K562 (cell line): ENCODE measurements at regions of chr1 and their contacts with region 1.

Region 1: GRCh38 chr1:203267347-203267846 is 37.9 kb upstream of the BTG2 start:
- DNase-seq: peak; percentile 74 to 91 (median 76)
- ATAC-seq: peak; percentile 79
- H3K4me3 ChIP-seq: peak overlapping the region; percentile 43
- H3K27ac ChIP-seq: no peak overlapping the region
- H3K4me1 ChIP-seq: peaks cover 5 to 8% of the 10 kb centered on the region in 2 experiments; a peak in 4 of 5 replicates
- H3K27me3 ChIP-seq: peaks cover 13 to 18% of the 10 kb centered on the region in 2 experiments
- CTCF ChIP-seq: peak; percentile 93 to 97 (median 96)
- EP300 ChIP-seq: no peak
- POLR2A ChIP-seq: no peak
- RAD21 ChIP-seq: peak; percentile 88 to 92

Region 2: DNA sequence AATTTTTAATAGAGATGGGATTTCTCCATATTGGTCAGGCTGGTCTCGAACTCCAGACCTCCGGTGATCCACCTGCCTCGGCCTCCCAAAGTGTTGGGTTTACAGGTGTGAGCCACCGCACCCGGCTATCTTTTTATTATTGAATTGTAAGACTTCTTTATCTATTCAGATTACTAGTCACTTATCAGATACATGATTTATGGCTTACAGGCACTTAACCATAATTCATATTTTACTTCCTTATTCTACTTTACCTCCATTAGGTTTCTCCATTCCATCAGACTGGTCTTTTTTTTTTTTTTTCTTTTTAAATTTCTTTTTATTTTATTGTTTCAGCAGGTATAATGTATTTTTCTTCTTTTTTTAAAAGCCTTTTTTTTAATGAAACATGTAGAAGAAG is 255.8 kb before region 1 on chr1:
- CTCF ChIA-PET with region 1: no interaction called
- POLR2A ChIA-PET with region 1: no interaction called
- in situ Hi-C with region 1: no loop called
- intact Hi-C with region 1: no loop called
- DNase-seq: no peak
- ATAC-seq: no peak
- H3K4me3 ChIP-seq: no peak overlapping the region
- H3K27ac ChIP-seq: no peak overlapping the region
- H3K4me1 ChIP-seq: peaks cover 0 to 4% of the 10 kb centered on the region in 2 experiments; a peak in 2 of 5 replicates
- H3K27me3 ChIP-seq: no peaks in the 10 kb centered on the region
- CTCF ChIP-seq: no peak
- EP300 ChIP-seq: no peak
- POLR2A ChIP-seq: no peak
- RAD21 ChIP-seq: no peak

Region 3: DNA sequence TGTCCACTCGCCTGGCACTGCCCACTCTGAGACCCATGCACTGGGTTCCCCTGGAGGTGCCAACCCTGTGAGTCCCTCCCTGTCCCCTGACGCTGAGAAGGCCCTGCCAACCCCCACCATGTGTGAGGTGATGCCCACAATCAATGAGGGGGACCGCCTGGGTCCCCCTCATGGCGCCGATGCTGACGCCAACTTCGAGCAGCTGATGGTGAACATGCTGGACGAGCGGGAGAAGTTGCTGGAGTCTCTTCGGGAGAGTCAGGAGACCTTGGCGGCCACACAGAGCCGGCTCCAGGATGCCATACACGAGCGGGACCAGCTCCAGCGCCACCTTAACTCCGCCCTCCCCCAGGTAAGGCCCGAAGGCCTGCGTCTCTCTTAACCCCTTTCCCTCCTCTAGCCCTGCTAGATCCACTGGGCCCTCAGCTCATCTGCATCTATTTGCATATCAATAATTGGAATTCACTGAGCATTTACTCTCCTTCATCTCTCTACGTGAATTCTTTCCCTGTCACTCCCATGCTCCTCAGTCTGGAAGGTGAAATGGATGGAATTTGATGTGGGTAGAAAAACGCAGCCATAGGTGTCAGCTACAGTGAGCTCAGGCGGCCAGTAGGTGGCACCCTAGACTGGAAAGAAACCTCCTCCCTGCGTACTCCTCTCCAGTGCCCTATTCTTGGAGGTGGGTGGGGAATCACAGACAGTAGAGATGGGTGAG is 228.3 kb before region 1 on chr1:
- CTCF ChIA-PET with region 1: interaction called, 4 read pairs
- POLR2A ChIA-PET with region 1: no interaction called
- in situ Hi-C with region 1: no loop called
- intact Hi-C with region 1: loop called (anchors 1 kb)
- DNase-seq: peak; percentile 81 to 83 (median 82)
- ATAC-seq: peak; percentile 95
- H3K4me3 ChIP-seq: no peak overlapping the region
- H3K27ac ChIP-seq: no peak overlapping the region
- H3K4me1 ChIP-seq: no peaks in the 10 kb centered on the region; a peak in 2 of 5 replicates
- H3K27me3 ChIP-seq: peaks cover 31 to 59% of the 10 kb centered on the region in 2 experiments; a peak in 4 of 5 replicates
- CTCF ChIP-seq: peak; percentile 91 to 99 (median 97)
- EP300 ChIP-seq: no peak
- POLR2A ChIP-seq: no peak
- RAD21 ChIP-seq: peak; percentile 72 to 90

Region 4: GRCh38 chr1:203216274-203217138 is 50.9 kb before region 1 on chr1:
- CTCF ChIA-PET with region 1: no interaction called
- POLR2A ChIA-PET with region 1: interaction called, 3 read pairs
- in situ Hi-C with region 1: no loop called
- intact Hi-C with region 1: loop called (anchors 2 kb)
- DNase-seq: peak; percentile 71 to 82 (median 75)
- ATAC-seq: peak; percentile 94
- H3K4me3 ChIP-seq: no peak overlapping the region
- H3K27ac ChIP-seq: no peak overlapping the region
- H3K4me1 ChIP-seq: no peaks in the 10 kb centered on the region
- H3K27me3 ChIP-seq: peaks cover 17 to 61% of the 10 kb centered on the region in 2 experiments
- CTCF ChIP-seq: peak; percentile 84 to 93 (median 86)
- EP300 ChIP-seq: no peak
- POLR2A ChIP-seq: no peak
- RAD21 ChIP-seq: peak; percentile 88 to 93

Region 5: GRCh38 chr1:203406446-203407045 is 139.1 kb after region 1 on chr1:
- CTCF ChIA-PET with region 1: no interaction called
- POLR2A ChIA-PET with region 1: no interaction called
- in situ Hi-C with region 1: no loop called
- intact Hi-C with region 1: no loop called
- DNase-seq: no peak
- ATAC-seq: no peak
- H3K4me3 ChIP-seq: no peak overlapping the region
- H3K27ac ChIP-seq: no peak overlapping the region
- H3K4me1 ChIP-seq: no peaks in the 10 kb centered on the region; a peak in 1 of 5 replicates
- H3K27me3 ChIP-seq: peaks cover 28 to 36% of the 10 kb centered on the region in 2 experiments
- CTCF ChIP-seq: no peak
- EP300 ChIP-seq: no peak
- POLR2A ChIP-seq: no peak
- RAD21 ChIP-seq: no peak

Region 6: DNA sequence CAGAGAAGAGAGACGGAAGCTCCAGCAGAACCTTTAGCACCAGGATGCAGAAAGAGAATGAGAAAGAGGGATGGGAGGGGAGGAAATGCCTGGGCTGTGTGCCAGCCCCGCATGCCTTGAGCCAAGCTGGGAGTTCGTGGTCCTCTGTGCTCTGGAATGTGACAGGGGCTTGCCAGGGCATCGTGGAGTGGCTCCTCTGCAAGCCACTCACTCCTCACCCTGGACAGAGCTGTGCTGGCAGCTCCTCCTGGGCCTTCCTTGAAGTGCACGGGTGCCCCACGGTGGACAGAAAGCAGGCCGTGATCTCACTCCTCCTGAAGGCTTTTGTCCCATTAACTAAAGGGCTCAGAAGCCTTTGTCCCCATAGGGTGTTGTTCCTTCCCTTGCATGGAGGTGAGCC is 173.4 kb after region 1 on chr1:
- CTCF ChIA-PET with region 1: interaction called, 4 read pairs
- POLR2A ChIA-PET with region 1: interaction called, 3 read pairs
- in situ Hi-C with region 1: no loop called
- intact Hi-C with region 1: loop called (anchors 5 kb)
- DNase-seq: peak in 1 of 4 experiments; percentile 24
- ATAC-seq: peak; percentile 68
- H3K4me3 ChIP-seq: no peak overlapping the region
- H3K27ac ChIP-seq: no peak overlapping the region
- H3K4me1 ChIP-seq: no peaks in the 10 kb centered on the region
- H3K27me3 ChIP-seq: peaks cover 16 to 39% of the 10 kb centered on the region in 2 experiments; a peak in 3 of 5 replicates
- CTCF ChIP-seq: peak; percentile 28 to 48 (median 47); a peak in 4 of 6 replicates
- EP300 ChIP-seq: no peak
- POLR2A ChIP-seq: no peak
- RAD21 ChIP-seq: peak; percentile 49 to 64

Region 7: GRCh38 chr1:203777274-203778005 is 510.0 kb after region 1 on chr1:
- CTCF ChIA-PET with region 1: no interaction called
- POLR2A ChIA-PET with region 1: no interaction called
- in situ Hi-C with region 1: no loop called
- intact Hi-C with region 1: no loop called
- DNase-seq: no peak
- ATAC-seq: no peak
- H3K4me3 ChIP-seq: no peak overlapping the region
- H3K27ac ChIP-seq: no peak overlapping the region
- H3K4me1 ChIP-seq: no peaks in the 10 kb centered on the region; a peak in 2 of 5 replicates
- H3K27me3 ChIP-seq: peaks cover 9 to 17% of the 10 kb centered on the region in 2 experiments; a peak in 4 of 5 replicates
- CTCF ChIP-seq: no peak
- EP300 ChIP-seq: no peak
- POLR2A ChIP-seq: no peak
- RAD21 ChIP-seq: no peak